CD4-positive, alpha-beta T cell (primary cell): ENCODE measurements at regions of chr6 and their contacts with region 1.

Region 1: DNA sequence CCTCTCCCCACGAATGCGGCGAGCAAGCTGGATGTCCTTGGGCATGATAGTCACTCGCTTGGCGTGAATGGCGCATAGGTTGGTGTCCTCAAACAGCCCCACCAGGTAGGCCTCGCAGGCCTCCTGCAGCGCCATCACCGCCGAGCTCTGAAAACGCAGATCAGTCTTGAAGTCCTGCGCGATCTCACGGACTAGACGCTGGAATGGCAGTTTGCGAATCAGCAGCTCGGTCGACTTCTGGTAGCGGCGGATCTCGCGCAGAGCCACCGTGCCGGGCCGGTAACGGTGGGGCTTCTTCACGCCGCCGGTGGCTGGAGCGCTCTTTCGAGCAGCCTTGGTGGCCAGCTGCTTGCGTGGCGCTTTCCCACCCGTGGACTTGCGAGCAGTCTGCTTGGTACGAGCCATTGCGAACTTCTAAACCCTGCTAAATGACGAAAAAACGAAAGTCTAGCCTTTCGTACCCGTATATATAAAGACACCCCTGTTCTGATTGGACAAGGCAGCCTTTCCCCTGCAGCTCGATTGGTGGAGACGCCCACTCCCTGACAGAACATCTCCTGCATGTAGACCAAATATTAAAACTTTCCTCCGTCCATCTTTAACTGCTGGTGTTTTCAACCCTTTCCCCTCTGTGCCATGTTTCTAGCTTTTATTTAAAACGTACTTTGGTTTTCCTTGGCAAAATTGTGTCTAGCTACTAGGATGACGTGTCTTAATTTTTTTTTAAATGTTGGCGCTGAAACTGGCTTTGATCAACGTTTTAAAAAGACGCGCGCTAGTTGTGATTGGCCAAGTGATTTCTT is 109.8 kb downstream of the HFE start:
- DNase-seq: peak; percentile 60 to 97 (median 70)
- ATAC-seq: peak; percentile 55
- H3K4me3 ChIP-seq: peak overlapping the region; percentile 75
- H3K4me3 Mint-ChIP-seq: peak overlapping the region; percentile 94
- H3K27ac ChIP-seq: peak overlapping the region; percentile 81 to 87
- H3K27ac Mint-ChIP-seq: peak overlapping the region; percentile 97
- H3K4me1 ChIP-seq: peaks cover 26% of the 10 kb centered on the region
- H3K4me1 Mint-ChIP-seq: peaks cover 57% of the 10 kb centered on the region
- H3K27me3 ChIP-seq: no peaks in the 10 kb centered on the region
- H3K27me3 Mint-ChIP-seq: no peaks in the 10 kb centered on the region
- CTCF ChIP-seq: no peak

Region 2: DNA sequence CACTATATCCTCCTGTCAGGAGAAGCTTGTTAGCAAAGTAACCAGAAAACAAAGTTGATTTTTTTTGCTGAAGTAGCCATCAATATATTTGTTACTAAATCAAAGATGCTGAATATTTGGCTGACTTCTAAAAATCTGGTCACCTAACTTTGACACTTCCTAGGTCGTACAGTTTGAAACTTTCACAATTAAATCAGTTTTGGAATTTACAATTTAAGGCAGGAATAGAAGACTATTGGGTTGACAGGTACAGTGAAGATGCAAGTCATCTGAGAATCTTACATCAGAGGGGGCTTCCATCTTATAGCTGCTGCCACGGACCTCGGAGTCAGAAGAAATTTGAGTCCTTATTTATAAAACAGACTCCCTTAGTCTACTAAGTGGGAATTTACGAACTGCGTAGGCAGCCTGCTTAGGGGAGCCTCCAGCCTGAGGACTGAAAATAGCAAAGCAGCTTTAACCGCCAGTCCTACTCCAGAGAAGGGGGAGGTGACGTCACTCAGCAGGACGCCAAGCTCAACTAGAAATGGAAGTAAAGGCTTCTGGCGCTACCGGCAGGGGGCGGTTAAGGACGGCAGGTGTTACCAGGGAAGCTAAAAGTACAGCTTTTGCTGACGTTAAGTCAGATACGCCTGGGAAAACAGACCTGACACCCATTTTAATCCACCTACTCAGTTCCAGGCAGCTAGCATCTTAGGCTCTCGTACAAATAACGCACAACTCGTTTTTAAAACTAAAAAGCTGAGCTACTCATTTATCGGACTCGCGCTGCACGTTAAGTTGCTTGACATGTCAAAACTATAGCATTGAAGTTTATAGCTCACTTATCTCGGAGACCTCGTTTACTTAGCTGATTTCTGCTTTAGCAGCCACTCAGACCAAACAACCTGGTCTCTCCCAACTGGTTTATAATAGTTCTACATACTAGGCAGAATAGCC is 170.9 kb before region 1 on chr6:
- CTCF ChIA-PET with region 1: interaction called, 4 read pairs
- POLR2A ChIA-PET with region 1: interaction called, 101 read pairs
- intact Hi-C with region 1: loop called (anchors 5 kb)
- DNase-seq: peak; percentile 75 to 98 (median 88)
- ATAC-seq: peak; percentile 45
- H3K4me3 ChIP-seq: peak overlapping the region; percentile 70
- H3K4me3 Mint-ChIP-seq: peak overlapping the region; percentile 90
- H3K27ac ChIP-seq: peak overlapping the region; percentile 86 to 88
- H3K27ac Mint-ChIP-seq: peak overlapping the region; percentile 97
- H3K4me1 ChIP-seq: peaks cover 34% of the 10 kb centered on the region
- H3K4me1 Mint-ChIP-seq: peaks cover 42% of the 10 kb centered on the region
- H3K27me3 ChIP-seq: no peaks in the 10 kb centered on the region
- H3K27me3 Mint-ChIP-seq: no peaks in the 10 kb centered on the region
- CTCF ChIP-seq: peak; percentile 86

Region 3: DNA sequence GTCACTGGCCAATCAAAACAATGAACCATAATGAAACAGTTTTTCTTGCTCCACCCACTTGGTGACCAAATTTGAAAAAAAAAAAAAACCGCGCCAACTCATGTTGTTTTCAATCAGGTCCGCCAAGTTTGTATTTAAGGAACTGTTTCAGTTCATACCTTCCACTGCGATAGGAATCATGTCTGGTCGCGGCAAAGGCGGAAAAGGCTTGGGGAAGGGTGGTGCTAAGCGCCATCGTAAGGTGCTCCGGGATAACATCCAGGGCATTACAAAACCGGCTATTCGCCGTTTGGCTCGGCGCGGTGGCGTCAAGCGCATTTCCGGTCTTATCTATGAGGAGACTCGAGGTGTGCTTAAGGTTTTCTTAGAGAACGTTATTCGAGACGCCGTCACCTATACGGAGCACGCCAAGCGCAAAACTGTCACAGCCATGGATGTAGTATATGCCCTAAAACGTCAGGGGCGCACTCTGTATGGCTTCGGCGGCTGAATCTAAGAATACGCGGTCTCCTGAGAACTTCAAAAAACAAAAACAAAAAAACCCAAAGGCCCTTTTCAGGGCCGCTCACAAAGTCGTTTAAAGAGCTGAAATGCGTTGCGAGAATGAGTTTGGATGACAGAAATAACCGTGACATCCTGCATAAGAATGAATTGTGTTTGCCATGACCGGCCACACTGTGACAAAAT is 93.1 kb before region 1 on chr6:
- CTCF ChIA-PET with region 1: interaction called, 11 read pairs
- POLR2A ChIA-PET with region 1: interaction called, 90 read pairs
- intact Hi-C with region 1: loop called in 1 of 2 experiments (anchors 5 kb)
- DNase-seq: peak; percentile 84 to 96 (median 90)
- ATAC-seq: peak; percentile 88
- H3K4me3 ChIP-seq: peak overlapping the region; percentile 58
- H3K4me3 Mint-ChIP-seq: peak overlapping the region; percentile 94
- H3K27ac ChIP-seq: peak overlapping the region; percentile 83 to 85
- H3K27ac Mint-ChIP-seq: peak overlapping the region; percentile 99
- H3K4me1 ChIP-seq: peaks cover 16% of the 10 kb centered on the region
- H3K4me1 Mint-ChIP-seq: peaks cover 13% of the 10 kb centered on the region
- H3K27me3 ChIP-seq: no peaks in the 10 kb centered on the region
- H3K27me3 Mint-ChIP-seq: peaks cover 5% of the 10 kb centered on the region
- CTCF ChIP-seq: peak; percentile 58

Region 4: GRCh38 chr6:26223650-26224546 is 26.9 kb after region 1 on chr6:
- CTCF ChIA-PET with region 1: interaction called, 9 read pairs
- POLR2A ChIA-PET with region 1: interaction called, 1,838 read pairs
- intact Hi-C with region 1: no loop called
- DNase-seq: peak in 13 of 14 experiments; percentile 45 to 93 (median 60)
- ATAC-seq: peak; percentile 87
- H3K4me3 ChIP-seq: peak overlapping the region; percentile 68
- H3K4me3 Mint-ChIP-seq: no peak overlapping the region
- H3K27ac ChIP-seq: peak overlapping the region; percentile 72 to 82
- H3K27ac Mint-ChIP-seq: no peak overlapping the region
- H3K4me1 ChIP-seq: peaks cover 18% of the 10 kb centered on the region
- H3K4me1 Mint-ChIP-seq: peaks cover 5% of the 10 kb centered on the region
- H3K27me3 ChIP-seq: no peaks in the 10 kb centered on the region
- H3K27me3 Mint-ChIP-seq: no peaks in the 10 kb centered on the region
- CTCF ChIP-seq: no peak

Region 5: GRCh38 chr6:26285143-26286134 is 88.4 kb after region 1 on chr6:
- CTCF ChIA-PET with region 1: interaction called, 6 read pairs
- POLR2A ChIA-PET with region 1: interaction called, 163 read pairs
- intact Hi-C with region 1: loop called in 1 of 2 experiments (anchors 2 kb)
- DNase-seq: peak; percentile 85 to 99 (median 92)
- ATAC-seq: peak; percentile 82
- H3K4me3 ChIP-seq: peak overlapping the region; percentile 62
- H3K4me3 Mint-ChIP-seq: peak overlapping the region; percentile 87
- H3K27ac ChIP-seq: peak overlapping the region; percentile 82 to 85
- H3K27ac Mint-ChIP-seq: peak overlapping the region; percentile 96
- H3K4me1 ChIP-seq: peaks cover 16% of the 10 kb centered on the region
- H3K4me1 Mint-ChIP-seq: peaks cover 24% of the 10 kb centered on the region
- H3K27me3 ChIP-seq: no peaks in the 10 kb centered on the region
- H3K27me3 Mint-ChIP-seq: peaks cover 11% of the 10 kb centered on the region
- CTCF ChIP-seq: no peak

Region 6: DNA sequence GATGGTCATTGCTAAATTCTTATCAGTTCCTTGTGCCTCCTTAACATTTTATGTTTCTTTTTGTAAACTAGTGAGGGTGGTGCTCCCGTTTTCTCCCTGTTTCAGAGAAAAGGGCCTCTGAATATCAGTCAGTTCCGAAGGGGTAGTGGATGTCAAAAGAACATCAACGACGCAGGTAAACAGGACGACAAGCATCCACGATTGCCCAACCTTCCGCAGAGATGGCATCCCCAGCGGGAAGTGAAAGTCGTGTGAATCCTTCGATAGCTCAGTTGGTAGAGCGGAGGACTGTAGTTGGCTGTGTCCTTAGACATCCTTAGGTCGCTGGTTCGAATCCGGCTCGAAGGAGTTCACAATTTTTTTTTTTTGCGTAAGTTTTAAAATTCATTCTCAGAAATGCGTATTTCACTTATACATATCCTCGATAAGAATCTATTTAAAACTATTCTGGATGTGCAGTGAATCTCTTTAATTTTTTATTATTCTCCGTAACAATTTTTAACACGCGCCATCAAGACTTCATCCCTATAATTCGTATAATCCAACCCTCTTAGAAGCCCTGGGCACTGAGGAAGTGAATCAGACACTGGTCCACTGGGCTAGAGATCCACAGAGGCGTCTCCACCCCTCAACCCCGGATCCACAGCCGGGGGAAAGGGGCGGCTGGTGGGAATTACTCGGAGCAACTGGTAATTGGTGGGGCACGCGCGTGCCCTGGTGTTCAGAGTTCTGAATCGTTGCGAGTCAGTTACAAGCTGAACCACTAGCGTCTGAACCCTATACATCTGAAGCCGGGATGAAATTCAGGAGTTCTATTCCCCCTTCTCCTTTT is 371.8 kb after region 1 on chr6:
- CTCF ChIA-PET with region 1: no interaction called
- POLR2A ChIA-PET with region 1: interaction called, 26 read pairs
- intact Hi-C with region 1: no loop called
- DNase-seq: peak; percentile 96 to 100 (median 98)
- ATAC-seq: peak; percentile 74
- H3K4me3 ChIP-seq: peak overlapping the region; percentile 55
- H3K4me3 Mint-ChIP-seq: peak overlapping the region; percentile 97
- H3K27ac ChIP-seq: peak overlapping the region; percentile 37 to 53
- H3K27ac Mint-ChIP-seq: peak overlapping the region; percentile 100
- H3K4me1 ChIP-seq: peaks cover 21% of the 10 kb centered on the region
- H3K4me1 Mint-ChIP-seq: peaks cover 29% of the 10 kb centered on the region
- H3K27me3 ChIP-seq: no peaks in the 10 kb centered on the region
- H3K27me3 Mint-ChIP-seq: peaks cover 16% of the 10 kb centered on the region
- CTCF ChIP-seq: peak; percentile 58

Region 7: GRCh38 chr6:27111743-27112142 is 914.7 kb after region 1 on chr6:
- CTCF ChIA-PET with region 1: no interaction called
- POLR2A ChIA-PET with region 1: no interaction called
- intact Hi-C with region 1: no loop called
- DNase-seq: no peak
- ATAC-seq: no peak
- H3K4me3 ChIP-seq: no peak overlapping the region
- H3K4me3 Mint-ChIP-seq: no peak overlapping the region
- H3K27ac ChIP-seq: no peak overlapping the region
- H3K27ac Mint-ChIP-seq: no peak overlapping the region
- H3K4me1 ChIP-seq: no peaks in the 10 kb centered on the region
- H3K4me1 Mint-ChIP-seq: no peaks in the 10 kb centered on the region
- H3K27me3 ChIP-seq: peaks cover 15 to 16% of the 10 kb centered on the region in 2 experiments
- H3K27me3 Mint-ChIP-seq: peaks cover 54% of the 10 kb centered on the region
- CTCF ChIP-seq: no peak

Region 8: GRCh38 chr6:27825025-27825793 is 1628.2 kb after region 1 on chr6:
- CTCF ChIA-PET with region 1: no interaction called
- POLR2A ChIA-PET with region 1: interaction called, 23 read pairs
- intact Hi-C with region 1: no loop called
- DNase-seq: peak in 2 of 14 experiments; percentile 27 to 38
- ATAC-seq: no peak
- H3K4me3 ChIP-seq: peak overlapping the region; percentile 82
- H3K4me3 Mint-ChIP-seq: peak overlapping the region; percentile 90
- H3K27ac ChIP-seq: peak overlapping the region; percentile 77 to 87
- H3K27ac Mint-ChIP-seq: peak overlapping the region; percentile 99
- H3K4me1 ChIP-seq: peaks cover 8% of the 10 kb centered on the region
- H3K4me1 Mint-ChIP-seq: peaks cover 38% of the 10 kb centered on the region
- H3K27me3 ChIP-seq: no peaks in the 10 kb centered on the region
- H3K27me3 Mint-ChIP-seq: no peaks in the 10 kb centered on the region
- CTCF ChIP-seq: no peak